H1 (cell line): ENCODE measurements at regions of chr20 and their contacts with region 1.

Region 1: DNA sequence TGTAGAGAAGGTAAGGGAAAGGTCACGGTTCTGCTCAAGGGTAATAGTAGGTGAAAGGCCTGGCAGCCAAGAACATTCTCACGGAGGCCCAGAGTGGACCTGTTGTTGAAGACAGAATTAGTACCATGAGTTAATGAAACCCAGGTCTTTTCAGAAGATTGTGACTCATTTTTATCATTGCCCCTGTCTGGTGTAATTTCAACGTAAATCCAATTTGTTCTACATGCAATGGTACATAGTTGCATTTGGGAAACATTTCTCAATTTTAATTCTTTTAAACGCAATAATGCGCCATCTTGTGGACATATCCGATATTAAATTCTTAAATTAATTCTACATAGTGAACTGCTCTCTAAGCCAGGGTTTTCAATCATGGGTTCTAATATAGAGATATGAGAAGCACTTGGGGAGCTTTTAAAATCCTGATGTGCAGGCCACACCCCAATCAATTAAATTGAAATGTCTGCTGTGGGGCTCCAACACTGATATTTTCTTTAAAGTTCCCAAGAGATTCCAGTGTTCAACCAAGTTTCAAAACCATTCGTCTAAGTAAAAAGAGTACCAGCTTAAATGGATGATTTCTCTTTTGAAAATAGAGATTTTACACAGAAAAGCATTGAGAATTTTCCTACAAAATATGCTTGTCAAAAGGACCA is 257.4 kb downstream of the PLCB1 start:
- DNase-seq: no peak
- H3K4me3 ChIP-seq: no peak overlapping the region
- H3K27ac ChIP-seq: no peak overlapping the region
- H3K4me1 ChIP-seq: peaks cover 0 to 6% (median 2%) of the 10 kb centered on the region in 4 experiments; a peak in 4 of 7 replicates
- H3K27me3 ChIP-seq: no peaks in the 10 kb centered on the region
- CTCF ChIP-seq: peak in 2 of 3 experiments; percentile 16 to 38; a peak in 2 of 4 replicates
- EP300 ChIP-seq: no peak
- POLR2A ChIP-seq: no peak
- RAD21 ChIP-seq: peak in 1 of 2 experiments; percentile 26

Region 2: GRCh38 chr20:8131598-8132483 is 257.7 kb before region 1 on chr20 and contains the start of gene PLCB1:
- CTCF ChIA-PET with region 1: interaction called, 18 read pairs
- POLR2A ChIA-PET with region 1: no interaction called
- DNase-seq: peak; percentile 69 to 91
- H3K4me3 ChIP-seq: peak within 1 kb of the TSS; percentile 35 to 77 (median 54)
- H3K27ac ChIP-seq: no peak within 1 kb of the TSS
- H3K4me1 ChIP-seq: peaks cover 0 to 6% (median 2%) of the 10 kb centered on the region in 4 experiments; a peak in 2 of 7 replicates
- H3K27me3 ChIP-seq: peaks cover 8 to 28% (median 19%) of the 10 kb centered on the region in 4 experiments
- CTCF ChIP-seq: peak; percentile 87 to 97 (median 89)
- EP300 ChIP-seq: no peak
- POLR2A ChIP-seq: no peak
- RAD21 ChIP-seq: peak; percentile 92
- total RNA-seq, gene PLCB1: 8.6 and 9.1 TPM in 2 replicates

Region 3: GRCh38 chr20:8372824-8373380 is 16.6 kb before region 1 on chr20:
- CTCF ChIA-PET with region 1: interaction called, 16 read pairs
- POLR2A ChIA-PET with region 1: no interaction called
- DNase-seq: no peak
- H3K4me3 ChIP-seq: no peak overlapping the region
- H3K27ac ChIP-seq: no peak overlapping the region
- H3K4me1 ChIP-seq: no peaks in the 10 kb centered on the region; a peak in 1 of 7 replicates
- H3K27me3 ChIP-seq: no peaks in the 10 kb centered on the region
- CTCF ChIP-seq: no peak
- EP300 ChIP-seq: no peak
- POLR2A ChIP-seq: no peak
- RAD21 ChIP-seq: no peak